ENCODE measurements at regions of chr4 and their contacts with region 1.

Region 1: DNA sequence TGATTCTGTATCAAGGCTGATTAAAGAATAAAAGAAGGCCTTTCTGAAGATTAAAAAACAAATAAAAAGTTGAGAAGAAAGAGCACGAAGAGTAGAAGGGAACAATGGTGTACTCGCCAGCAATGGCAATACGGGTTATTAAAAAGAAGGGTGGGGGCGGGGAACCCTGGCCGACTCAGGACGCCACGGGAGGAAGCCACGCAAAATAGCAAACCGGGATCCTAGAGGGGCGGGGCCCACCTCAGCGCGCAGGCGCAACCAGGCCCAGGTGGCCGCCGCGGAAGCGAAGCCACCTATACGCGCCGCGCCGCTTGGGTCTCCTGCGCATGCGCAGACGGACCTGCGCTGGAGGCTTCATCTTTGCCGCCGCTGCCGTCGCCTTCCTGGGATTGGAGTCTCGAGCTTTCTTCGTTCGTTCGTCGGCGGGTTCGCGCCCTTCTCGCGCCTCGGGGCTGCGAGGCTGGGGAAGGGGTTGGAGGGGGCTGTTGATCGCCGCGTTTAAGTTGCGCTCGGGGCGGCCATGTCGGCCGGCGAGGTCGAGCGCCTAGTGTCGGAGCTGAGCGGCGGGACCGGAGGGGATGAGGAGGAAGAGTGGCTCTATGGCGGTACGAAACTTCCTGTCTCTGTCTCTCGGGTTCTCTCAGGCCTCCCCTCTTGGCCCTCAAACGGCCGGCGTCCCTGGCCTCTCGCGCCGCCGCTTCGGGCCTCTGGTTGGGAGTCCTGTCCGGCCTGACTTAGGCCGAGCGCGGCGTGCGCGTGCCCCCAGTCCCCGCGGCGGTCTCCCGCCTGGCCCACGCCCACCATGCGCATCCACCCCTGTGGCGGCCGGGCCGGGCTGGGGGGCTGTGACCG is at the start of gene FIP1L1:
- DNase-seq: peak; percentile 98
- H3K4me3 ChIP-seq: peak within 1 kb of the TSS; percentile 68 to 97 (median 92)
- H3K27ac ChIP-seq: peak within 1 kb of the TSS; percentile 83 to 91 (median 90)
- H3K4me1 ChIP-seq: peaks cover 3 to 32% (median 26%) of the 10 kb centered on the region in 4 donors
- H3K27me3 ChIP-seq: peaks cover 0 to 1% (median 0%) of the 10 kb centered on the region in 4 donors
- CTCF ChIP-seq: peak in 1 of 3 experiments; percentile 9
- EP300 ChIP-seq: no peak
- POLR2A ChIP-seq: peak; percentile 61
- total RNA-seq, gene FIP1L1: 31.9 to 44.4 (median 39.6) TPM

Region 2: DNA sequence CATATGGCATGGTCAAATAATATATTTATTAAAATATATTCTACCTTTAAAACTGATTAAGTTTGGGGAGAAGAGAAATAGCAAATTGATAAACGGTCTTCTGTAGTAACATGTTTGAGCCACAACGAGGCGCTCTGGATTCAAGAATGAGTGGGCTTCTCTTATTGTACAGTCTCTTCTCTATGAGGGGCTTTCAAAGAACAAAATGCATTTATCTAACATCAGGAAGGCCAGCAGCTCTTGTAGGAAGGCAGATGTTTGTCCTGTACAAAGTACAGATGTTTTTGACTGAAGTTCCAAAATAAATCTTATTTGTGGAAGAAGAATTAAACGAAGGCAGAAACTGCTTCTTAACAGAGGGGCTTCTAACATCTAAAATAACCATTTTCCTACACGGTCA is 361.9 kb before region 1 on chr4:
- intact Hi-C with region 1: loop called (anchors 10 kb)
- DNase-seq: no peak
- H3K4me3 ChIP-seq: no peak overlapping the region
- H3K27ac ChIP-seq: peak overlapping the region in 1 of 4 donors; percentile 24
- H3K4me1 ChIP-seq: peaks cover 26 to 38% (median 33%) of the 10 kb centered on the region in 4 donors
- H3K27me3 ChIP-seq: no peaks in the 10 kb centered on the region
- CTCF ChIP-seq: peak; percentile 26 to 53 (median 49)
- EP300 ChIP-seq: no peak
- POLR2A ChIP-seq: no peak

Region 3: GRCh38 chr4:53196882-53197771 is 180.4 kb before region 1 on chr4:
- intact Hi-C with region 1: no loop called
- DNase-seq: no peak
- H3K4me3 ChIP-seq: no peak overlapping the region
- H3K27ac ChIP-seq: no peak overlapping the region
- H3K4me1 ChIP-seq: peaks cover 0 to 5% (median 2%) of the 10 kb centered on the region in 4 donors
- H3K27me3 ChIP-seq: no peaks in the 10 kb centered on the region
- CTCF ChIP-seq: peak; percentile 54 to 70 (median 69)
- EP300 ChIP-seq: no peak
- POLR2A ChIP-seq: no peak

Region 4: GRCh38 chr4:54064295-54065111 is 687.0 kb after region 1 on chr4 and contains the start of gene CHIC2:
- intact Hi-C with region 1: loop called (anchors 10 kb)
- DNase-seq: peak; percentile 98
- H3K4me3 ChIP-seq: peak within 1 kb of the TSS; percentile 77 to 96 (median 95)
- H3K27ac ChIP-seq: peak within 1 kb of the TSS; percentile 87 to 96 (median 90)
- H3K4me1 ChIP-seq: peaks cover 41 to 58% (median 54%) of the 10 kb centered on the region in 4 donors
- H3K27me3 ChIP-seq: no peaks in the 10 kb centered on the region
- CTCF ChIP-seq: no peak
- EP300 ChIP-seq: peak; percentile 57
- POLR2A ChIP-seq: peak; percentile 91
- total RNA-seq, gene CHIC2: 29.8 to 40.4 (median 33.6) TPM